HEK293 (cell line): ENCODE measurements at regions of chr11 and their contacts with region 1.

Region 1: DNA sequence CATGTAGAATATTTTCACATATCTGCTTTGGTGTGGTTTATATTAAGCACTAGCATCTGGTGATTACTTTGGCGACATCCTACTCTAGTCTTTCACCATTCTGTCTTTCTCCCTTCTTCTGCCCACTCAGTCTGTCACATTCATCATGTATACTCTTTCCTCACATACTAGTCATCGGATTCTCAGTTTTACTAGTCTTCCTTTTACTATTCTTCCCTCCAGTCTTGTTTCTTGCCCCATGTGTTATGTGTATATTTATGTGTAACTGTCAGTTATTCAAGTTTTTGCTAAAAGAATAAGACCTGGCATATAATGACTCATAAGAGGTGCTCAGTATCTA is 4.6 kb upstream of the DIXDC1 start:
- H3K4me3 ChIP-seq: no peak overlapping the region
- H3K27ac ChIP-seq: no peak overlapping the region
- H3K4me1 ChIP-seq: no peaks in the 10 kb centered on the region
- CTCF ChIP-seq: no peak

Region 2: DNA sequence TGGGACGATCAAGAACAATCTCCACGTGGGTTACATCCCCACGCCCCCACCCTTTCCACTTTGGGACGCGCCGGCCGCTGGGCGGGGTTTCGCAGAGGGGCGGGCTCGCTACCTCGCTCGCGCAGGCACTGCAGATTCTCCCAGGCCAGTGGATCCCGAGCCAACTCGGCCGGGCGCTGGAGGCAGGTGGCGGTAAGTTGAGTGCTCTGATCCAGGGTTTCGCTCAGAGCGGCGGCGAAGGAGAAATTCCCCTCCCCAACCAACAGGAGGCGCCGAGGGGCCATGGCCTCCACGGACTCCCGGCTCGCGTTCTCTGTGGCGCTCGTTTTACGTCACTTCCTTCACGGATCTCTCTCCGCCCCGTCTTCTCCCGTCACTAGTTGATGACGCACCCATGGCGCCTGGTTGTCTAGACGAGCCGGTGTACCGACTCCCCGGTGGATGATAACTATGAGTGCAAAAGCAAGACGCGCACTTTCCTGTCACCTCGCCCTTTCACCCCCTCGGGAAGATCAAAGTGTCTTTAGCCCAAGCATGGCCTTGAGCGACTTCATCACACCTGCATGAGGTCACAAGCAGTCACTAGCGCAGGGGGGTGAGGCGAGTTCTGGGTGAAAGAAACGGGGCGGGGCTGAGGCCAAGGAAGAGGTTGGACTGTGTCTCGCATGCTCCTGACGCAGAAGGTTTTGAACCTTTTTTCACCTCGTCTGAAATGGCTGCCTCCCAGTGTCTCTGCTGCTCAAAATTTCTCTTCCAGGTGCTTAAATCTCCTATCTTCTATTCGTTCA is 53.5 kb before region 1 on chr11 and contains the starts of genes CFAP68 and FDXACB1:
- CTCF ChIA-PET with region 1: interaction called, 10 read pairs
- POLR2A ChIA-PET with region 1: interaction called, 4 read pairs
- H3K4me3 ChIP-seq: peak within 1 kb of the TSS; percentile 65
- H3K27ac ChIP-seq: peak within 1 kb of the TSS; percentile 52
- H3K4me1 ChIP-seq: no peaks in the 10 kb centered on the region
- CTCF ChIP-seq: peak; percentile 94